Naive thymus-derived CD4-positive, alpha-beta T cell (primary cell): ENCODE measurements at regions of chr7 and their contacts with region 1.

Region 1: DNA sequence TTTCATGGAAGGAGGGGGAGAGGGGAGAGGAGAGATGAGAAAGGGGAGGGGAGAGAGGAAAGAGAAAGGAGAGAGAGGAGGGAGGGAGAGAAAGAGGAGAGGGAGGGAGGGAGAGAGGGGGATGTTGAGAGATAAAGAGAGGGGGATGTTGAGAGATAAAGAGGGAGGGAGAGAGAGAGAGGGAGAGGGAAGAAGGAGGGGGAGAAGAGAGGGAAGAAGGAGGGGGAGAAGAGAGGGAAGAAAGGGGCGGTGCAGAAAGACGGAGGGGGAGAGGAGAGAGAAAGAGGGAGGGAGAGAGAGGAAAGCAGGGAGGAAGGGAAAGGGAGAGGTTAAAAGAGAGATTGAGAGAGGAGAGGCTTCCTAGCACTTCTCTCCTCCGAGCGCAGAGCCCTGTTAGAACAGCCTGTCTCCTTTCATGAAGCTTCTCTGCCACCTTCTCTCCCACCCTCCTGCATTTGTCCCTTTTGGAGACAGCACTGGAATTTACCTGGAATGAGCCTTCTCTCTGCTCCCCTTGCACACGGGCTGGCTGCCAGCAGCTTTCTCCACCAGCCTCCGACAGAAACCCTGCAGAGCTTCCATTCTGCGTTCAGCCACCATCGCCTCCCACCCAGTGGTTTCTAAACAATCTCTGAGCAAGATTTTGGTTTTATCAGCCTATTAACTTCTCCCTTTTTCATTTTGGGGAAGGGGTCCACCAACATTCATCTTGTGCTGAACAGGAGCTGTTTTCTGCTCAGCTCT is 74.0 kb upstream of the CARD11 start:
- DNase-seq: peak in 6 of 9 donors; percentile 15 to 49 (median 30)
- ATAC-seq: peak; percentile 64
- H3K4me3 ChIP-seq: peak overlapping the region; percentile 28
- H3K4me3 Mint-ChIP-seq: peak overlapping the region in 9 of 10 donors; percentile 75 to 91 (median 84)
- H3K27ac ChIP-seq: peak overlapping the region; percentile 43
- H3K27ac Mint-ChIP-seq: peak overlapping the region in 7 of 9 donors; percentile 72 to 96 (median 92)
- H3K4me1 ChIP-seq: peaks cover 20 to 47% of the 10 kb centered on the region in 2 donors
- H3K4me1 Mint-ChIP-seq: peaks cover 36 to 63% (median 59%) of the 10 kb centered on the region in 7 donors
- H3K27me3 ChIP-seq: no peaks in the 10 kb centered on the region
- H3K27me3 Mint-ChIP-seq: no peaks in the 10 kb centered on the region

Region 2: GRCh38 chr7:3103614-3104398 is 13.9 kb before region 1 on chr7:
- CTCF ChIA-PET with region 1: interaction called, 3 read pairs
- POLR2A ChIA-PET with region 1: interaction called, 5 read pairs
- intact Hi-C with region 1: loop called in 1 of 2 experiments (anchors 1 kb)
- DNase-seq: peak in 1 of 9 donors; percentile 20
- ATAC-seq: peak; percentile 81
- H3K4me3 ChIP-seq: no peak overlapping the region
- H3K4me3 Mint-ChIP-seq: peak overlapping the region in 3 of 10 donors; percentile 27 to 55 (median 44)
- H3K27ac ChIP-seq: no peak overlapping the region
- H3K27ac Mint-ChIP-seq: peak overlapping the region in 7 of 9 donors; percentile 5 to 79 (median 69)
- H3K4me1 ChIP-seq: peaks cover 17 to 29% of the 10 kb centered on the region in 2 donors
- H3K4me1 Mint-ChIP-seq: peaks cover 23 to 79% (median 62%) of the 10 kb centered on the region in 7 donors
- H3K27me3 ChIP-seq: no peaks in the 10 kb centered on the region
- H3K27me3 Mint-ChIP-seq: no peaks in the 10 kb centered on the region